ENCODE measurements at regions of chr20 and their contacts with region 1.

Region 1: GRCh38 chr20:50115591-50116372 is 2.8 kb upstream of the UBE2V1 start:
- DNase-seq: peak; percentile 89 to 98
- H3K4me3 ChIP-seq: peak overlapping the region; percentile 54 to 66
- H3K27ac ChIP-seq: peak overlapping the region; percentile 70 to 71
- H3K4me1 ChIP-seq: peaks cover 5 to 31% of the 10 kb centered on the region in 2 donors
- H3K27me3 ChIP-seq: no peaks in the 10 kb centered on the region
- CTCF ChIP-seq: no peak

Region 2: DNA sequence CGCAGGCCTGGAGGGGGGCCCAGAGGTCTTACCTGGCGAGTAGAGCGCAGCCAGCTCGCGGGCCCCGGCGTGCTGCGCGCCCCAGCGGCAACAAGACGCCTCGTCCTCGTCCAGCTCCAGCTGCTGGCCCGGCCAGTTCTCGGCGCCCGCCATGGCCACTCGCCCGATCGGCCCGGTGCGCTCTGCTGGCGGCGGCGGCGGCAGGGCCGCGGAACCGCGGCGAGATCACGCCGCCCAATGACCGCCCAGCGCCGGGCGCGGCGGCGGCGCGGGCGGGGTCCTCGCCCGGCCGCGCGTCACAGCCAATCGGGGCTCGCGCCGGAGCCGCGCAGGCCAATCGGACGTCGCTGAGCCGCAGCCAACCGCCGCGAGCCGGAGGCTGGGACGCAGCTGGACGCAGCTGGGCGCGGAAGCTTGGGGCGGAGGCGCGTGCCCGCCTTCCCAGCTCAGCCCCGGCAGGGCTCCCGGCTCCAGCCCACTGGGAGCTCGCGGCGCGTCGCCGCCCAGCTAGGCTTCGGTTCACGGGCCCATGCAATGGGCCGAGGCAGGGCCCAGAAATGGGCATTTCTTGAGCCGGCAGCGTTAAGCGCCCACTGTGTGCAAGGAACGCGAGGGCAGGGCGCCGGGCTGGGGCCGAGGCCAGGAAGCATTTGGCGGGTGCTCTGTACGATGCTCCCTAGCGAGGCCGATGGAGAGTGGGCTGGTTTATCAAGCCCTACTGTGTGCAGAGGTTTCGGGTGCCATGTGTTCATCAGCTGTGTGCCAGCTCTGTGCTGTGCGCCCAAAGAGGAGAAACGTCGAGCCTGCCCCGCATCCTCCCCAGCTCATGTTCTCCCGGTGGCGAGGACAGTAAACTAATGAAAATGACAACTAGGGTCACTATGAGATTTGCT is 37.9 kb after region 1 on chr20 and contains the start of gene PEDS1:
- intact Hi-C with region 1: loop called (anchors 2 kb)
- DNase-seq: peak; percentile 49 to 94
- H3K4me3 ChIP-seq: peak within 1 kb of the TSS; percentile 81 to 84
- H3K27ac ChIP-seq: peak within 1 kb of the TSS; percentile 73 to 76
- H3K4me1 ChIP-seq: peaks cover 7 to 23% of the 10 kb centered on the region in 2 donors
- H3K27me3 ChIP-seq: no peaks in the 10 kb centered on the region
- CTCF ChIP-seq: peak in 1 of 3 experiments; percentile 14
- total RNA-seq, gene PEDS1: 23.9 TPM